ENCODE measurements at regions of chr2 and their contacts with region 1.

Region 1: GRCh38 chr2:172102391-172103278 is at the start of gene DLX2:
- DNase-seq: peak; percentile 87
- H3K4me3 Mint-ChIP-seq: peak within 1 kb of the TSS; percentile 85
- H3K27ac Mint-ChIP-seq: peak within 1 kb of the TSS; percentile 84
- H3K4me1 Mint-ChIP-seq: peaks cover 39% of the 10 kb centered on the region
- H3K27me3 Mint-ChIP-seq: peaks cover 76% of the 10 kb centered on the region
- total RNA-seq, gene DLX2: 0.26 TPM in 1 of 2 replicates, not detected in the other

Region 2: DNA sequence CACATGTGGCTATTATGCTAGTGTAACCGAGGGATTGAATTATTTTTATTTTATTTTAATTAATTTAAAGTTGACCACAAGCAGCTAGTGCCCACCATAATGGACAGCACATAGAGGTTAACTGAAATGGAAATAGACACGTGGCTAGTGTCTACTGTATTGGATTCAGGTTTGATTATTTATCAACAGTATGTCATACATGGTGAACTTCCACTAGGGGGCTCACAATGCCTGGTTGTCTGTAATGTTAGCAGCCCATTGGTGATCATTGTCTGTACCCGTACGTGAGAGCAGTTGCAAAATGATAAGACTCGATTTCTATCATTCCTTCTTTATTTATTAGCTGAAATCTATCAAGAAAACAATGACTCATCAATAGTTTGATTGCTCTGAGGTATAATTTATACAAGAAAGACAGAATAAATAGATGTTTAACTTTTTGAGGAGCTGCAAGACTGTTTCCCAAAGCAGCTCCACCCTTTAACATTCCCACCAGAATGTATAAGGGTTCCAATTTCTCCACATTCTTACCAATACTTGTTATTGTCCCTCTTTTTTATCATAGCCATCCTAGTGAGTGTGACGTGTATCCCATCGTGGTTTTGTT is 503.8 kb before region 1 on chr2:
- intact Hi-C with region 1: loop called (anchors 5 kb)
- DNase-seq: peak; percentile 83
- H3K4me3 Mint-ChIP-seq: no peak overlapping the region
- H3K27ac Mint-ChIP-seq: no peak overlapping the region
- H3K4me1 Mint-ChIP-seq: peaks cover 2% of the 10 kb centered on the region
- H3K27me3 Mint-ChIP-seq: peaks cover 14% of the 10 kb centered on the region

Region 3: GRCh38 chr2:171703574-171704347 is 398.9 kb before region 1 on chr2:
- intact Hi-C with region 1: loop called (anchors 1 kb)
- DNase-seq: peak; percentile 66
- H3K4me3 Mint-ChIP-seq: no peak overlapping the region
- H3K27ac Mint-ChIP-seq: no peak overlapping the region
- H3K4me1 Mint-ChIP-seq: peaks cover 3% of the 10 kb centered on the region
- H3K27me3 Mint-ChIP-seq: no peaks in the 10 kb centered on the region

Region 4: GRCh38 chr2:171811245-171811628 is 291.4 kb before region 1 on chr2:
- intact Hi-C with region 1: loop called (anchors 10 kb)
- DNase-seq: no peak
- H3K4me3 Mint-ChIP-seq: no peak overlapping the region
- H3K27ac Mint-ChIP-seq: no peak overlapping the region
- H3K4me1 Mint-ChIP-seq: no peaks in the 10 kb centered on the region
- H3K27me3 Mint-ChIP-seq: no peaks in the 10 kb centered on the region

Region 5: GRCh38 chr2:172084734-172085459 is 17.7 kb before region 1 on chr2:
- intact Hi-C with region 1: loop called (anchors 1 kb)
- DNase-seq: peak; percentile 83
- H3K4me3 Mint-ChIP-seq: peak overlapping the region; percentile 78
- H3K27ac Mint-ChIP-seq: peak overlapping the region; percentile 81
- H3K4me1 Mint-ChIP-seq: peaks cover 34% of the 10 kb centered on the region
- H3K27me3 Mint-ChIP-seq: peaks cover 90% of the 10 kb centered on the region

Region 6: DNA sequence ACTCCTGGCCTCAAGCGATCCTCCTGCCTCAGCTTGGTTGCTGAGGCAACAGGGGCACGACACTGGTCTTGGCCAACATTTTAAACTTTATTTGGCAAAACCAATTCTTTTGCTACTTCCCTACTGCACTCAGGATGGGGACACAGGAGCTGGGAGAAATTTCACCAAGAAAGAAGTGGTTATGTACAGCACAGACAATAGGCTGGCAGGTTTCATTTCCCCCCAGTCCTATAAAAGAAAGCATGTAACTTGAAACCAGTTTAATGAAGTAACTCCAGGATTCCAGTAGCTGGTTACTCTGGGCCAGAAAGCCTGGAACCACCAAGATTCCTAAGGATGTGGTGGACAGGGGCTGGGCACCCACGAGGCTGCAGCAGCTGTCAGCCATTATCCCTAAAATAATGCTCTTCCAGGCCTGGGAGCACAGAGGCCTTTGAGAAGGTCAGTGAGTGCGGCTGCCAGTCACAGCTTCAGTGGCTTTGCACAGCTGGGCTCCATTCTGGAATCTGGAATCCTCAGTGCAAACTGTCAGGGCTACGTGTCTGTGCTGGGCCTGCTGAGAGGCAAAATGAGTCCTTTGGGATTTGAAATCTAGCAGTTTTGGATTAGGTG is 182.5 kb after region 1 on chr2:
- intact Hi-C with region 1: no loop called
- DNase-seq: no peak
- H3K4me3 Mint-ChIP-seq: no peak overlapping the region
- H3K27ac Mint-ChIP-seq: no peak overlapping the region
- H3K4me1 Mint-ChIP-seq: peaks cover 8% of the 10 kb centered on the region
- H3K27me3 Mint-ChIP-seq: peaks cover 12% of the 10 kb centered on the region